Activated CD4-positive, alpha-beta T cell treated with anti-CD3 and anti-CD28 coated beads, Interleukin-2, amount 10 ng/mL, durations not matched to agents 24 days and 14 days (primary cell): ENCODE measurements at regions of chr6 and their contacts with region 1.

Region 1: DNA sequence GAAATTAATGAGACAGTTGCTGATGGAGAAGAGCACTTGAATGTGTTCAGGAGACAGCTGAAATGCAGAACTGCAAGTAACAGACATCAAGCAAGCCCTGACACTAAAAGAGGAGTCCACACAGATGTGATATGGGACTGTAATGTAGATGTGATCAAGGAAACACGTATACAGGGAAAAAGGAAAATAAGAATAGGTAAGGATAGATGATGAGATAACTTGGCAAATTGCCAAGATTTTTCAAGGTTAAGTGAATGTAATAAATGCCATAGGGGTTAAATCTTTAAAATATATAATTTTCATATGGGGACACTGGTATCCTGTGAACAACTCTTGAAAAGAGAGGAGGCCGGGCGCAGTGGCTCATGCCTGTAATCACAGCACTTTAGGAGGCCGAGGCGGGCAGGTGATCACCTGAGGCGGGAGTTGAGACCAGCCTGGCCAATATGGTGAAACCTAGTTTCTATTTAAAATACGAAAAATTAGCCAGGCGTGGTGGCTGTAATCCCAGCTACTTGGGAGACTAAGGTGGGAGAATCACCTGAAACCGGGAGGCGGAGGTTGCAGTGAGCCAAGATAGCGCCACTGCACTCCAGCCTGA is 7.2 kb upstream of the SNX14 start:
- DNase-seq: no peak
- H3K4me3 Mint-ChIP-seq: no peak overlapping the region
- H3K27ac Mint-ChIP-seq: no peak overlapping the region
- H3K4me1 Mint-ChIP-seq: no peaks in the 10 kb centered on the region
- H3K27me3 Mint-ChIP-seq: peaks cover 2% of the 10 kb centered on the region

Region 2: DNA sequence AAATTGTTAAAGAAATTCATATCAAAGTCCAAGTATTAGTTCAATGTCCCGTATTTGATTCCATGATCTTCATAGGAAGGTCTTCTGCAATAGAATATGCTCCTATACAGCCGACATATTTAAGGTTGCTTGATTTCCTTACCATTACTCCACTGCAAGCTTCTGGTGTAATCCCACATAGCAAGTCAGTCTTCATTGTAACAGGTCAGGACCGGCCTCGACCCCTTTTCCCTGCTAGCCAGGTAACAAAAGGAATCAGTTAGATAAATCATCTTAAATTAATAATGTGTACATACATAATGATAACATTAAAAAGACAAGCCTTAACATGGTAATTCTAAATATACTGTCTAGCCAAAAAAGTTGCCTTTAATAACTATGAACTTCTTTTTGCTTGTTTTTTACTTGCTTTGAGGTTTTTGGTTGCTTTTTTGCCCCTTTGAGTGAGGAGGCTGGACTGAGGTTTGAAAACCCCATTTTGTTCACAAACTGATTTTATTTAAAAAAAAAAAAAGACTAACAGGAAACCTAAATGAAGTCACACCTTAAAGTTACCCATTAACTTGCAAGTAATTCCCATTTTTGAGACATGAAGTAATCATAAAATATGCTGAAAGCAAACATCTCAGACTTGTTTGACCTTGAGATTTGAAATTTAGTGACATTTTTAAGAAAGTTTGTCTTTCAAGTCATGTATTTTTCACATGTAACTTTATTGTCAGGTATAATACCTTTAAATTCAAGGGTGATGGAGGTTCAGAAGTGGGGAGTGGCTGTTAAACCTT is 12.1 kb after region 1 on chr6:
- intact Hi-C with region 1: loop called (anchors 1 kb)
- DNase-seq: no peak
- H3K4me3 Mint-ChIP-seq: no peak overlapping the region
- H3K27ac Mint-ChIP-seq: no peak overlapping the region
- H3K4me1 Mint-ChIP-seq: peaks cover 6% of the 10 kb centered on the region
- H3K27me3 Mint-ChIP-seq: no peaks in the 10 kb centered on the region